GM12878 (cell line): ENCODE measurements at regions of chr5 and their contacts with region 1.

Region 1: DNA sequence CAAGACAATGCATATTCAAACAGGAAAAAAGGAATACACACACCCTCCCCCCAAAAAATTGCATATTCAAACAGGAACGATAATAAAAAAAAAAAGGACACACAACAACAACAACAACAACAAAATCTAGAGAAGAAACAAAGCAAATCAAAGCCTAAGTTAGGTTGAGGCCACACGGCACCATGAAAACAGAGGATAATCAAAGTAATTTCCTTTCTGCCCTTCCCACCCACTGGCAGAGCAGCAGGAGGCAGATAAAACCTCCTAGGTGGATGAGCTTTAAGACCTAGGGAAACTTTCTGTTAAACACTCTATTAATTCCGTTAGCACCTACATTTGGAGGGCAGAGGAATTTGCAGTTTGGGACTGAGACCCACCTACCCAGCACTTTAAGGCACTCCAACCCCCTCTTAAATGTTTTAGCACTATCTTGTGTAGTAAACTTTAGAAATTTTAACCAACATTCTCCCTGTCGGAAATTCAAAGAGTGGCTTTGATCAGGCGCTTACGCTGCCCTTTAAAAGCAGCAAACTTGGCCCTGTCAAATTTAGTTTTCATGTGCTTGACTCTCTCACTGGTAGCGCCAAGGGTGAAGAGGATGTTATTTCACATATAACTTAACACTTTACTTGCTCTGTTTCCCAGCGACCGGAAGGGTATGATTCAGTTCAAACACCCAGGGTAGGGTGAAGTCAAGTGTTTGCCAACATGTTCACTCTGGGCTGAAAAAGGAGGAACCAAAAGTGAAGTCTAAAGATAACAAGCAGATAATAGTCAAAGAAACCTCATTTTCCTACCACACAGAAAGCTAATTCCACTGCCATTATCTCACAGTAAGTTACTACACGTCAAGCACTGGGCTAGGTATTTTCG is 9.2 kb downstream of the ENC1 start:
- DNase-seq: peak; percentile 97
- ATAC-seq: peak; percentile 88
- H3K4me3 ChIP-seq: peak overlapping the region; percentile 50; the same call in 1 of the 2 replicates
- H3K27ac ChIP-seq: peak overlapping the region; percentile 83
- H3K4me1 ChIP-seq: peaks cover 30% of the 10 kb centered on the region
- H3K27me3 ChIP-seq: no peaks in the 10 kb centered on the region
- CTCF ChIP-seq: no peak
- EP300 ChIP-seq: peak; percentile 84 to 85; a peak in 3 of 4 replicates
- POLR2A ChIP-seq: no peak
- RAD21 ChIP-seq: no peak

Region 2: DNA sequence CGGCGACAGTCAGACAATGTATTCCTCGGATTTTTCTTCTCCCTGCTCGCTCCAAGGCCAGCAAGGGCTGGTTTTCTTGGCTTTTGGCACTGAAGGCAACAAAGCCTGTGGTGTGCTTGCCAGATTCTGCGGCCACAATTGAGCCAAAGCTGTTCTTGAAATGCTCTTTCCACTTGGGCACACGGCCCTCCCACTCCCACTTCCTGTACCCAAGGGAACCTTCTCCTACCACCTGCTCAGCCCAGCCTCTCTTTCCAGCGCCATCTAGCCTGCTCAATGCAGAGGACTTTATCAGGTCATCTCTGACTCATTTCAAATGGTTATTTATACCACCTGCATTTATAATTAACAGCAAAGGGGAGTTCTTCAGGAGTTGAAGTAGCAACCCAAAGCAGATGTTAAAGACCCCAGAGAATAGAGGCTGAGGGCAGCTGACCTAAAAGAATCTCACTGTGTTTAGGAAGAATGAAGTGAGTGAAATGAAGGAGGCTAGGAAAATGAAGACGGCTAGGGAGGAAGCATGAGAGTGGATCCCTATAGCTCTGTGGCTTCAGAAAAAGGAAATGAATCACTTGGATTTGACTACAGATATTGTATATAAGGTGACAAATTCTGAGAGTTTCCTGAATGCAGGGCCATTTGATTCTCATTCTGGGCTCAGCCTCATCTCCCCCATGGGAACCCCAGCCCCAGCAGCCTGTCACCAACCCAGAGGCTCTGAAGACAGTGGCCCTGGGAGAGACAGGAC is 429.8 kb before region 1 on chr5:
- CTCF ChIA-PET with region 1: no interaction called
- POLR2A ChIA-PET with region 1: interaction called, 3 read pairs
- RAD21 ChIA-PET with region 1: no interaction called
- SMC1A ChIA-PET with region 1: no interaction called
- in situ Hi-C with region 1: no loop called
- intact Hi-C with region 1: loop called (anchors 2 kb)
- DNase-seq: peak; percentile 63
- ATAC-seq: peak; percentile 73
- H3K4me3 ChIP-seq: no peak overlapping the region
- H3K27ac ChIP-seq: peak overlapping the region; percentile 28; the same call in 1 of the 2 replicates
- H3K4me1 ChIP-seq: peaks cover 35% of the 10 kb centered on the region
- H3K27me3 ChIP-seq: no peaks in the 10 kb centered on the region
- CTCF ChIP-seq: peak in 1 of 3 experiments; percentile 12; a peak in 1 of 6 replicates
- EP300 ChIP-seq: 0 out of 4 replicates have a peak, but pooled peaks of 1 of the 2 experiments have one; percentile 18
- POLR2A ChIP-seq: no peak
- RAD21 ChIP-seq: no peak

Region 3: DNA sequence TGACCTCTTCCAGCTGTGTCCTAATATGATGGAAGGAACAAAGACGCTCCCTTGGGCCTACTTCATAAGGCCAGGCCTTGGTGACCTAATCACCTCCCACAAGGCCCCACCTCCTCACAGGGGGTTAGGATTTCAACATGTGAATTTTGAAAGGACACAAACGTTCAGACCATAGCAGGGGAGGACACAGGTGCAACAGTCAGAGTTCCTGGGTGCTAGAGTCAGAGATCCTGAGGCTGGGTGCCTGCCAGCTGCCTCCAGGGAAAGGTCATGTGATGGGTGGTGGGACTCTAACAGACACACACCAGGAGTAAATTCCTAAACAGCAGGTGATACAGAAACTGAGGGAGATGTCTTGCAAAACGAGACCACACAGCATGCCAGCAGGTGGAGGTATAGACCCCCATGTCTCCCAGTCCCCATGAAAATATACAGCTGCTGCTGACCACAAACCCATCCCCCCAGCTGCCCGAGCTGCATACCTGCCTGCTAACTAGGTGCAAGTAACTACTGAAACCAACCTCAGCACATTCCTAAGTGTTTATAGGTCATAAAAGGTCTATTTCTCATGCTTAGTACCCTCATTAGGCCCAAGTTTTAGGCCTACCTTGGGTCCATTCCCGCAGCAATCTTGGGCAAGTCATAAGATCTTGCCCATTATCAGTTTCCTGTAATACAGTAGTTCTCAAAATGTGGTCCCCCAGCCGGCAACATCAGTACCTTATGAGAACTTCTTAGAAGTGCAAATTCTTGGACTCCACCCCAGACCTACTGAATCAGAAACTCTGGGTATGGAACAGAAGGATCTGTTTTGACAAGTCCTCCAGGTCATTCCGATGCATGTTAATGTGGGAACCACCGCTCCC is 236.2 kb before region 1 on chr5:
- CTCF ChIA-PET with region 1: interaction called, 10 read pairs
- POLR2A ChIA-PET with region 1: interaction called, 4 read pairs
- RAD21 ChIA-PET with region 1: interaction called, 6 read pairs
- SMC1A ChIA-PET with region 1: interaction called, 3 read pairs
- in situ Hi-C with region 1: no loop called
- intact Hi-C with region 1: loop called (anchors 2 kb)
- DNase-seq: no peak
- ATAC-seq: peak; percentile 33
- H3K4me3 ChIP-seq: no peak overlapping the region
- H3K27ac ChIP-seq: no peak overlapping the region
- H3K4me1 ChIP-seq: peaks cover 14% of the 10 kb centered on the region
- H3K27me3 ChIP-seq: no peaks in the 10 kb centered on the region
- CTCF ChIP-seq: peak in 2 of 3 experiments; percentile 24 to 34; a peak in 3 of 6 replicates
- EP300 ChIP-seq: no peak
- POLR2A ChIP-seq: no peak
- RAD21 ChIP-seq: peak; percentile 46

Region 4: GRCh38 chr5:74589204-74590056 is 41.9 kb before region 1 on chr5:
- CTCF ChIA-PET with region 1: no interaction called
- POLR2A ChIA-PET with region 1: no interaction called
- RAD21 ChIA-PET with region 1: interaction called, 3 read pairs
- SMC1A ChIA-PET with region 1: interaction called, 6 read pairs
- in situ Hi-C with region 1: no loop called
- intact Hi-C with region 1: loop called (anchors 2 kb)
- DNase-seq: no peak
- ATAC-seq: peak; percentile 31; the same call in 1 of the 3 replicates
- H3K4me3 ChIP-seq: no peak overlapping the region
- H3K27ac ChIP-seq: no peak overlapping the region
- H3K4me1 ChIP-seq: no peaks in the 10 kb centered on the region
- H3K27me3 ChIP-seq: 0 out of 4 replicates have a peak, but pooled peaks cover 0 to 4% of the 10 kb centered on the region in 2 experiments
- CTCF ChIP-seq: no peak
- EP300 ChIP-seq: no peak
- POLR2A ChIP-seq: no peak
- RAD21 ChIP-seq: no peak